HepG2 (cell line): ENCODE measurements at regions of chr10 and their contacts with region 1.

Region 1: DNA sequence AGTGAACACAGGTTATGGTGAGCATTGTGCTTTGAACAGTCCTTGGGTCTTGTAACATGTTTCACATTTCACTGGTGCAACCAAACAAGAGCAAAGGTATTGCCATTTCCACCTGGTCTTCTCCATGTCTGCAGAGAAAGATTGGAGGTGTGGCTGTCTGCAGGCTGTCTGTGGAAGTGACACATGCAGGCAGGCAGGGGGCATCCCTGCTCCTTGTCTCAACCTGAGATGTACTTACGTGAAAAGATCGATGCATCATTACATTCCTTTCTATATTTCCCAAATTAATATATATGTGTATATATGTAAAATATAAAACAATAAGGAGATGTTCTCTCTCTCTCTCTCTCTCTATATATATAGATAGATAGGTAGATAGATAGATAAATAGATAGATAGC is 54.3 kb downstream of the LRRC18 start:
- DNase-seq: peak; percentile 3
- ATAC-seq: peak; percentile 58; the same call in 2 of the 3 replicates
- H3K4me3 ChIP-seq: no peak overlapping the region
- H3K27ac ChIP-seq: no peak overlapping the region
- H3K4me1 ChIP-seq: no peaks in the 10 kb centered on the region
- H3K27me3 ChIP-seq: no peaks in the 10 kb centered on the region
- CTCF ChIP-seq: peak; percentile 51
- EP300 ChIP-seq: no peak
- POLR2A ChIP-seq: no peak
- RAD21 ChIP-seq: no peak

Region 2: GRCh38 chr10:48913674-48914073 is 28.3 kb after region 1 on chr10:
- CTCF ChIA-PET with region 1: no interaction called
- POLR2A ChIA-PET with region 1: no interaction called
- in situ Hi-C with region 1: no loop called
- intact Hi-C with region 1: no loop called
- DNase-seq: no peak
- ATAC-seq: no peak
- H3K4me3 ChIP-seq: no peak overlapping the region
- H3K27ac ChIP-seq: no peak overlapping the region
- H3K4me1 ChIP-seq: no peaks in the 10 kb centered on the region
- H3K27me3 ChIP-seq: peaks cover 0 to 5% of the 10 kb centered on the region in 2 experiments; a peak in 1 of 5 replicates
- CTCF ChIP-seq: no peak
- EP300 ChIP-seq: no peak
- POLR2A ChIP-seq: no peak
- RAD21 ChIP-seq: no peak

Region 3: GRCh38 chr10:49164559-49165188 is 279.3 kb after region 1 on chr10:
- CTCF ChIA-PET with region 1: no interaction called
- POLR2A ChIA-PET with region 1: no interaction called
- in situ Hi-C with region 1: loop called (anchors 10 kb)
- intact Hi-C with region 1: no loop called
- DNase-seq: peak; percentile 28
- ATAC-seq: peak; percentile 92
- H3K4me3 ChIP-seq: no peak overlapping the region
- H3K27ac ChIP-seq: no peak overlapping the region
- H3K4me1 ChIP-seq: no peaks in the 10 kb centered on the region
- H3K27me3 ChIP-seq: no peaks in the 10 kb centered on the region; a peak in 1 of 5 replicates
- CTCF ChIP-seq: peak; percentile 69
- EP300 ChIP-seq: no peak
- POLR2A ChIP-seq: no peak
- RAD21 ChIP-seq: peak; percentile 51; the same call in 1 of the 2 replicates